ENCODE measurements at regions of chr7 and their contacts with region 1.

Region 1: DNA sequence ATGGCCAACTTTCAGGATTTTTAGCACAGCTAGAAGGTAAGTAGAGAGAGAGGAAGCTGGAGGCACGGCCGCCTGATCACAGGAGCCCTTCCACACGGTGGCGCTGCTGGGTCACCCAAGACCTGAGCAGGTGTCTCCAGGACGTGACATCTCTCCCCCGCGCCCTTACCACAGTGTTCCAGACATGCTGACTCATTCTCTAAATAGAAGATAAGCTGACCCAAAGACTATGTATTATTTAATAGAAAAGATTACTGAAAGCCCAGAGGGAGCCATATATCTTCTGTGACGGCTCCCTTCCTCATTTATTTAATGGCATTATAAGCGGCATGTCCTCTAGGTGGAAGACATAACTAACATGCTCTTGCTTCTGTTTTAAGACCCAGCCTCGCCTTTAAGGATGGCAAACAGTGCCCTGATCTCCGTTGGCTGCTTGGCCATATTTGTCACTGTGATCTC is 26.0 kb upstream of the MALSU1 start:
- DNase-seq: peak; percentile 79
- ATAC-seq: peak; percentile 99
- H3K4me3 Mint-ChIP-seq: peak overlapping the region; percentile 77
- H3K27ac Mint-ChIP-seq: no peak overlapping the region
- H3K4me1 Mint-ChIP-seq: peaks cover 8% of the 10 kb centered on the region
- H3K27me3 Mint-ChIP-seq: no peaks in the 10 kb centered on the region
- CTCF ChIP-seq: peak; percentile 36

Region 2: GRCh38 chr7:23181684-23182553 is 91.3 kb before region 1 on chr7 and contains the start of gene NUP42:
- CTCF ChIA-PET with region 1: interaction called, 4 read pairs
- POLR2A ChIA-PET with region 1: interaction called, 8 read pairs
- intact Hi-C with region 1: loop called (anchors 1 kb)
- DNase-seq: peak; percentile 90
- ATAC-seq: peak; percentile 90
- H3K4me3 Mint-ChIP-seq: peak within 1 kb of the TSS; percentile 94
- H3K27ac Mint-ChIP-seq: peak within 1 kb of the TSS; percentile 100
- H3K4me1 Mint-ChIP-seq: peaks cover 28% of the 10 kb centered on the region
- H3K27me3 Mint-ChIP-seq: no peaks in the 10 kb centered on the region
- CTCF ChIP-seq: no peak
- total RNA-seq, gene NUP42: 39.2 and 50.6 TPM in 2 replicates

Region 3: GRCh38 chr7:23298885-23299769 is 26.0 kb after region 1 on chr7 and contains the start of gene MALSU1:
- CTCF ChIA-PET with region 1: interaction called, 3 read pairs
- POLR2A ChIA-PET with region 1: interaction called, 5 read pairs
- intact Hi-C with region 1: loop called (anchors 1 kb)
- DNase-seq: peak; percentile 95
- ATAC-seq: peak; percentile 99
- H3K4me3 Mint-ChIP-seq: peak within 1 kb of the TSS; percentile 89
- H3K27ac Mint-ChIP-seq: peak within 1 kb of the TSS; percentile 95
- H3K4me1 Mint-ChIP-seq: peaks cover 39% of the 10 kb centered on the region
- H3K27me3 Mint-ChIP-seq: peaks cover 4% of the 10 kb centered on the region
- CTCF ChIP-seq: no peak
- total RNA-seq, gene MALSU1: 42.0 and 42.6 TPM in 2 replicates

Region 4: DNA sequence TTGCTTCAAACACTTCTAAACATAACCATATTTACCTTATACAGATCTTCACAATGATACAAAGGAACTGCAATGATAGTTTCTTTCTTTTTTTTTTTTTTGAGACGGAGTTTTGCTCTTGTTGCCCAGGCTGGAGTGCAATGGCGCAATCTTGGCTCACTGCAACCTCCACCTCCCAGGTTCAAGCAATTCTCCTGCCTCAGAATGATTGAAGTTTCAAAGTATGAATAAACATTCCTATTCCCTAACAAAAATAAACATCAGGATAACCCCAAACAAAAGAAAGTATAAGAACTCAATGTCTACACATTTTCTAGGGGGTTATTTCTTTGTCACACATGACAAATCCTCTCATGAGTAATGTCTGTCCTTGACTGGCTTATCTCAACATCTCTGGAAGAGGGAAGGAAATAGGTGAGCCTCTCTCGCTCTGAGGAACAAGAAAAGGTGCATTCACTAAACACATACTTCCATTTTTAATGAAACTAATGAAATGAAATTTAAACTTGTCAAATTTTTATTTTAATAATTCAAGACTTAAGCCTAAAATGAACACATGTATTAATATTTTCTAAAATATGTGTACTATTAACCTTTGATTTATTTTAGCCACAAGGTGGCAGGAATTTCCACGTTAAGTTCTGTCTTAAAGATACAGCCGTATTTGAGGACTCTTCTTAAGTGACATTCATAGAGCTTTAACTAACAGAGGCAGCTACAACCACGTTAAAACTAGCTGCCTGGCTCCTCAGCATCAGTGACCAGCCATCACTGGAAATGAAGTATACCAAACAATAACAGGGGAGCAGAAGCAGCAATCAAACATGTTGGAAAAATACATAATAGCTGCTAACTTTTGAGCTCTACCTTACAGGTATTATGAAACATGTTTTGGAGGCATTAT is 84.3 kb after region 1 on chr7:
- CTCF ChIA-PET with region 1: interaction called, 14 read pairs
- POLR2A ChIA-PET with region 1: no interaction called
- intact Hi-C with region 1: loop called (anchors 1 kb)
- DNase-seq: no peak
- ATAC-seq: peak; percentile 87
- H3K4me3 Mint-ChIP-seq: no peak overlapping the region
- H3K27ac Mint-ChIP-seq: no peak overlapping the region
- H3K4me1 Mint-ChIP-seq: peaks cover 20% of the 10 kb centered on the region
- H3K27me3 Mint-ChIP-seq: no peaks in the 10 kb centered on the region
- CTCF ChIP-seq: peak; percentile 22

Region 5: DNA sequence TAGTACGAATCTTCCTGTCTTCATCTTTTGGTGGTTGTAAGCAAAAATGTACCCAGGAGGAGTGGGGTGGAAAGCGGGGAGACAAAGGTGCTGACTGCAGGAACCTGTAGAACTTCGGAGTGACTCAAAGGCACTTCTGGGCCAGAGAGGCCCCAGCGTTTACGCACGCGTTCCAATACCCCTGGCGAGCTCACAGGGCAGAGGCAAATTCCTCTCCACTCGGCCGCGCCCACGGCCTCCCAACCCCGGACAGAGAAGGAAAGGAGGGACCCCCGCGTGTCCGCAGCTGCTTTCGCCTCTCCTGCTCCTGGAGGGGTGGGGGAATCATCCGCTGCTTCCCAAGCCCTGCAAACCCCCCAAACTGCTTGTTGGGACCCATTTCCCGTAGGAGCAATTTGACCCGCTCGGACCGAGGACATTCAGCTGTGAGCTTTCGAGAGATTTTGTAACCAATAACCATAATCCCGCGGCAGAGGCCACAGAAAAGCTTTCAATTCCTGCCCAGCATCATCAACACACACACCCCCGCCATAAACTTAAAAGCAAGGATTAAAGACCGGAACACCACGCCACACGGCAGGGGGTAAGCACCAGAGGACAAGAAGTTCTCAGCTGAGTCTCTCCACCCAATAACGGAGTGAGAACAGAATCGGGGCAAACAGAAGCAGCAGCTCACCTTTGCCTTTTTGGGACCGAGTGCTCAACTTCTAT is 194.8 kb after region 1 on chr7:
- CTCF ChIA-PET with region 1: interaction called, 21 read pairs
- POLR2A ChIA-PET with region 1: no interaction called
- intact Hi-C with region 1: loop called (anchors 1 kb)
- DNase-seq: peak; percentile 31
- ATAC-seq: no peak
- H3K4me3 Mint-ChIP-seq: peak overlapping the region; percentile 85
- H3K27ac Mint-ChIP-seq: peak overlapping the region; percentile 68
- H3K4me1 Mint-ChIP-seq: peaks cover 45% of the 10 kb centered on the region
- H3K27me3 Mint-ChIP-seq: peaks cover 47% of the 10 kb centered on the region
- CTCF ChIP-seq: no peak

Region 6: DNA sequence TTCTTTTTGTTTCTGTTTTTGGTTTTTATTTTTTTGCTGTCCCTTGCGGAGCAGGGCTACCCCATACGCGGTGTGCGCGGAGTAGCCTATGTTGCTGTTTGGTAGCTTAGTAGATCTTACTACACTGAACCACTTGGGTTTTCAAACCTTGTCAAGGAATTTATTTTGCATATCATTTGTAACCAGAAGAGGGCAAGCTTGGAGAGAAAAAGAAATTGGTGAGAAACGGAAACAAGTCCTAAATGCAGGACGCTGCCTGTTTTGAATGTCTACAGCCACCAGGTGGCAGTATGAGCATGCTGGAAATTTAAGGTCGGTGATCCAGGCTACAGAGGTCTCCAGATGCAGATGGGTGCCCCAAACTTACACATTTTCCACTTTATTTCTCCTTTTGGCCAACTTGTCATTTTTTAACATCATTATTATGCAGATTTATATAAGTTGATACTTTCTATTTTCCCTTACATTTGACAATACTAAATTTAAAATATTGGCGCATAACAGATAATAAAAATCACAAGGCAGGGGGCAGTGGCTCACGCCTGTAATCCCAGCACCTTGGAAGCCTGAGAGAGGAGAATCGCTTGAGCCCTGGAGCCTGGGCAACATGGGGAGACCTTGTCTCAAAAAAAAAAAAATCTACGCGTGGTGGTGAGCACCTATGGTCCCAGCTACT is 273.9 kb after region 1 on chr7:
- CTCF ChIA-PET with region 1: interaction called, 14 read pairs
- POLR2A ChIA-PET with region 1: no interaction called
- intact Hi-C with region 1: loop called (anchors 1 kb)
- DNase-seq: peak; percentile 40
- ATAC-seq: peak; percentile 91
- H3K4me3 Mint-ChIP-seq: no peak overlapping the region
- H3K27ac Mint-ChIP-seq: no peak overlapping the region
- H3K4me1 Mint-ChIP-seq: peaks cover 18% of the 10 kb centered on the region
- H3K27me3 Mint-ChIP-seq: no peaks in the 10 kb centered on the region
- CTCF ChIP-seq: no peak

Measured in activated B cell treated with CpG ODN at 0.5 μM for 24 hours (primary cell).